Motor neuron (in vitro differentiated cells): ENCODE measurements at regions of chr17 and their contacts with region 1.

Region 1: DNA sequence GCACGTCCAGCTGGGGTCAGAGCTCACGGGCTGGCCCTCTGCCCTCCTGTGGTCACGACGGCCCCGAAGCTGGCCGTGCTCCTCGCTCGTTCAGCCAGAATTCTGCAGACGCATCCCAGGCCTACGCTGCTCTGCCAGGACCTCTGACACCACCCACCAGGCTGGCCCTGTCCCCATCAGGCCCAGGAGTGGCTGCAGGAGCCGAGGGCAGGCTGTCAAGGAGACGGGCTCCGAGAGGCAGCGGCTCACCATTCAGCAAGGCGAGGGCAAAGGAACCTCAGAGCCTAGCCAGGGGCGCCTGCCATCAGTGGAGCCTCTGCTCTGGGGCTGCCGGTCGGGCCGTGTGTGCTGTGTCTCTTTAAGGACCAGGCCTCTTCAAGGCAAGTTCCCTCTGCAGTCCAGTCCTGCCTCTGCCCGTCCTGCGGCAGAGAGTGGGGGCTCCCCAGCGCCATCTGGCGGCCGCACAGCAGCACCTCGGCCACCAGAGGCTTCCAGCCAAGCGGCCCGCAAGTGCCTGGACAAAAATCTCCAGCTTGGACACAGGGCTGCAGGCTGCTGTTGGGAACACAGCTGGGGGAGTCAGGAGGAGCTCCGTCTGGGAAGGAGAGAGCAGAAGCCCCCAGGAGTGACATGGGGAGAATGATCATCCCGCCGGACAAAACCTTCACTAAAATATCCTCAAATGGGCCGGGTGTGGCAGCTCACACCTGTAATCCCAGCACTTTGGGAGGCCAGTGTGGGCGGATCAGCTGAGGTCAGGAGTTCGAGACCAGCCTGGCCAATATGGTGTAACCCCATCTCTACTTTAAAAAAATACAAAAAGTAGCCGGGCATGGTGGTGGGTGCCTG is 7.4 kb upstream of the ABR start:
- ATAC-seq: peak; percentile 89 to 98 (median 90)
- H3K4me3 ChIP-seq: peak overlapping the region in 2 of 5 donors; percentile 13 to 21
- H3K27ac ChIP-seq: no peak overlapping the region
- H3K4me1 ChIP-seq: peaks cover 19 to 22% of the 10 kb centered on the region in 2 donors

Region 2: GRCh38 chr17:1122533-1123392 is 64.4 kb before region 1 on chr17:
- in situ Hi-C with region 1: loop called in 1 of 9 experiments (anchors 10 kb)
- ATAC-seq: peak; percentile 48 to 95 (median 71)
- H3K4me3 ChIP-seq: no peak overlapping the region
- H3K27ac ChIP-seq: no peak overlapping the region
- H3K4me1 ChIP-seq: peaks cover 23 to 37% of the 10 kb centered on the region in 2 donors

Region 3: DNA sequence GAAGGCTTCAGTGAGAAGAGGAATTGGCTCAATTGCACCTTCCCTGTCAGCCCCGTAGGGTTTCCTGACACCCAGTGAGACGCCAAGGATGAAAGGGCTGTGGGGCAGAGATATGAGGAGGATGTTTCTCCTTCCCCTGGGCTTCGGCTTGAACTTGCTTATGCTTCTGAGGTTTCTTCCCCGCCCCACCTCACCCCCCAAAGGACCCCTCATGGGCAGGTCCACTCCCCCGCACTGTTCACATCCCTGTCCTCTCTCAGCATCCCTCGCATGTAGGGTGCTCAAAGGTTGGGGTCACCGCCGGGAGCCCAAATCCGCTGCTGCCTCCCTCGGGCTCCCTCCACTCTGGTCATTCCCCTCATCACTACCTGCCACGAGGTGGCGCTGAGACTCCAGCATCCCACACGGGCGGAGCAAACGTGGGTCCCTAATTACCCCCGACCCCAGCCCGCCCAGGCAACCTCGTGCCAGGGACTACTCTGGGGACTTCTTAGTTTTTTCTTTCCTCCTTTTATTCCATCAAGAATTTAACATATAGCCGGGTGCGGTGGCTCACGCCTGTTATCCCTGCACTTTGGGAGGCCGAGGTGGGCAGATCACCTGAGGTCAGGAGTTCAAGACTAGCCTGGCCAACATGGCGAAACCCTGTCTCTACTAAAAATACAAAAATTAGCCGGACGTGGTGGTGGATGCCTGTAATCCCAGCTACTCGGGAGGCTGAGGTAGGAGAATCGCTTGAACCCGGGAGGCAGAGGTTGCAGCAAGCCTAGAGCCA is 89.0 kb after region 1 on chr17:
- in situ Hi-C with region 1: no loop called
- ATAC-seq: peak; percentile 51 to 95 (median 60)
- H3K4me3 ChIP-seq: no peak overlapping the region
- H3K27ac ChIP-seq: no peak overlapping the region
- H3K4me1 ChIP-seq: peaks cover 5 to 14% of the 10 kb centered on the region in 2 donors